Dorsolateral prefrontal cortex (tissue), 120 donors: ENCODE measurements at regions of chr20 and their contacts with region 1.

Region 1: DNA sequence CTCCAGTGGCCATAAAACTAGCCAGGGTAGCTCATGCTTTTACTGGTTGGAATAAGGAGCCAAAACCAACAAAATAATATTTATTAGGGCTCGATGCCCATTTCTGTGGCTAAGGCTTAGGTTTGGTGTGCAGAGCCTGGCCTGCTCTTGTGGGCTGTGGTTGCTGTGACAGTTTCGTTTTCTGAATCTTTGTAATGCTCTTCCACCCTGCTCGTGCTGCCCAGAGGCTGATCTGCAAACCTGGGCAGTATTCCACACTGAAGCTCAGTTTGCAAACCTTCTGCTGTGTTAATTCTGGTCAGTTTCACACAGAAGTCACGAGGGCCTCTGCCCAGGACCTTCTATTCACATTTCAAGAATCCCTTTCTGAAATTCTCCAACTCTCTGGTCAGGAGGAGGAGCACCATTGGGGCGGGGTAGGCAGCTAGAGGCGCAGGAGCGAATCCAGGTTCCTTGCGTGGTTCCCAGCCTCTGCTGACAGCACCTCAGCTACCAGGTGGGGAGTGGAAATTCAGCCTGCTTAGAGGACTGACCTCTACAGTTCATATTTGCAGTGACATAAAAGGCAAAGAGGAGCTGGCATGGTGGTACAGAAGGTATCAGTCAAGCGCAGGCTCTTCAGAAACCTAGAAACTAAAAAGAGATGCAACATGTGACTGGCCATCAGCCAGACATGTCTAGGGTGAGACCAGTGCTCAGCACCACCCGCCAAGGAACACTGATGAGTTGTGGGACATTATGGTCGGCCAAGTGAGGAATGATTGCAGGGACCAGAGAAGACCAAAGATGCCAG is 14.3 kb upstream of the C20orf144 start:
- DNase-seq: no peak
- H3K4me3 ChIP-seq: no peak overlapping the region
- H3K27ac ChIP-seq: peak overlapping the region in 19 of 59 donors; percentile 1 to 80 (median 19)
- H3K27me3 ChIP-seq: no peaks in the 10 kb centered on the region
- CTCF ChIP-seq: no peak

Region 2: DNA sequence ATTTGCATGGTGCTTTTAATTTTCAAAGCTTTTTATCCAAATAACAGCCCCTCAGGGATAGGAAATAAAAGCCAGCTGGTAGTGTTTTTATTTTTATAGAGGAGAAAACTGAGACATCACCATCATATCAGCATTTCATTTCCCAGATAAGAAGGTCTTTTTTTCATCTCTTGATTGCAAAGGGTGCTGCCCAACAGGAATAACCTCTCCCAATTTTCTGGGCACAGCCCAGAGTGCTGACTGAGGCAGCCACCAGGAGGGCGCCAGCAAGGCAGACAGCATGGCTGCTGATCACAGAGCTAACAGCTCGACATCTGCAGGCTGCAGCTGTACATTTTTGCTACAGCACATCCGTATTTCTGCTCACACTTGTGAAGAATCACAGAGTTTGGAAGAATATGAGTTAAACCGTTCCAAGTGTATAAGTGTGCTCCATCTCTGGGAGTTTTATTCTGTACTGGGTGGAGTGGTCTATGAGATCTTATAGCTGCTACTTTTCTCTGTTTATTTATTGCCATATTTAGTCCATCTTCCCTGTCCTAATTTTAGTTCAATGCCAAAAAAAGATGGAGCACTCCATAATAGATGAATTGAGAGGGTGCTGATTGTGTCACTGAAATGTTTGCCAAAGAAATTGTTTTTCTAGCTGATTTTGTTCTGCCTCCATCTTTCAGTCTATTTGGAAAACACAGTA is 71.2 kb before region 1 on chr20:
- intact Hi-C with region 1: loop called in 1 of 2 experiments (anchors 10 kb)
- DNase-seq: peak in 9 of 10 donors; percentile 25 to 73 (median 61)
- H3K4me3 ChIP-seq: peak overlapping the region in 23 of 59 donors; percentile 3 to 44 (median 15)
- H3K27ac ChIP-seq: peak overlapping the region; percentile 21 to 89 (median 75)
- H3K27me3 ChIP-seq: no peaks in the 10 kb centered on the region
- CTCF ChIP-seq: peak in 46 of 56 donors; percentile 12 to 64 (median 40)

Region 3: DNA sequence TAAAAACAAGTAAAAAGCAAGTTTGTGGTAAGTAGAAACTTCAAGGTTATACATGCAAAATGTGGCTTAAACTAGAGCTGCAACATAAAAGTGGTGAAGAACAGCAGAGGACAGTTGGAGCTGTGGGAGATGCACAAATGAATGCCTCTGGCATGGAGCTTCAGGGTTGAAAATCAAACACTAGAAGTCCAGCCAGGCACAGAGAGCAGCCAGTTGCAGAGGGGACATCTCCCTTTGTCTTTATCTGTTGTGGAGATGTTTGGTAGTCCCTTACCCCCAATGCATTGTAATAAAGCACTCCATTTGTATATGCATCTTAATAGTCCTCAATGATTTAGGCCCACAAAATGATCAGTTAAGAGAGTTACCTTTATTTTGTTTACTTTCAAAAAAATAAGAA is 58.7 kb before region 1 on chr20:
- intact Hi-C with region 1: no loop called
- DNase-seq: no peak
- H3K4me3 ChIP-seq: no peak overlapping the region
- H3K27ac ChIP-seq: peak overlapping the region in 58 of 59 donors; percentile 0 to 92 (median 75)
- H3K27me3 ChIP-seq: no peaks in the 10 kb centered on the region
- CTCF ChIP-seq: no peak